Esophagus squamous epithelium (tissue), 5 donors: ENCODE measurements at regions of chr6 and their contacts with region 1.

Region 1: GRCh38 chr6:125153391-125154117 is at the start of gene TPD52L1:
- DNase-seq: no peak
- H3K4me3 ChIP-seq: peak within 1 kb of the TSS; percentile 69 to 76 (median 74)
- H3K27ac ChIP-seq: peak within 1 kb of the TSS; percentile 88 to 96 (median 94)
- H3K4me1 ChIP-seq: peaks cover 0 to 61% (median 7%) of the 10 kb centered on the region in 3 donors
- H3K27me3 ChIP-seq: peaks cover 0 to 4% (median 0%) of the 10 kb centered on the region in 4 donors
- CTCF ChIP-seq: peak; percentile 53 to 95 (median 86)
- POLR2A ChIP-seq: peak in 2 of 4 donors; percentile 24 to 56
- total RNA-seq, gene TPD52L1: 202 to 409 (median 275) TPM

Region 2: GRCh38 chr6:124854338-124854922 is 299.1 kb before region 1 on chr6:
- intact Hi-C with region 1: no loop called
- DNase-seq: no peak
- H3K4me3 ChIP-seq: no peak overlapping the region
- H3K27ac ChIP-seq: no peak overlapping the region
- H3K4me1 ChIP-seq: no peaks in the 10 kb centered on the region
- H3K27me3 ChIP-seq: no peaks in the 10 kb centered on the region
- CTCF ChIP-seq: peak in 2 of 6 experiments; percentile 21 to 30
- POLR2A ChIP-seq: no peak

Region 3: DNA sequence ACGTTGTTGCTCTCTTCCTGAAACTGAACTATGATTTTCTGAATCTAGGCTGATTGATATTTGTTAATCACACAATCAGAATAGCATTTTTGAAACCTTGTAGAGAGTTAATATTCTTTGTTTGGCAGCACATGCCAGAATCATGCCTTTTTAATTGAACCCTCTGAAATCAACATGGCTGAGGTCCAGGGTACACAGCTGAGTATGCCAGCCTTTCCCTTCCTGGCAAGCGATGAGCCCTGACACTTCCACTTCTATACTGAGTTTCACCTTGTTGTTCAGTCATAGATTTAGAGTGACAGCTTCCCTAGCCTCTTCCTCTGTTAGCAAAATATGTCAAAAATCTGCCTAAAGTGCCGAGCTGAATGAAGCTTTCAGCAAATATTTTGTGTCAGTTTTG is 141.4 kb after region 1 on chr6:
- intact Hi-C with region 1: loop called (anchors 10 kb)
- DNase-seq: no peak
- H3K4me3 ChIP-seq: no peak overlapping the region
- H3K27ac ChIP-seq: peak overlapping the region in 1 of 4 donors; percentile 7
- H3K4me1 ChIP-seq: peaks cover 5 to 52% (median 6%) of the 10 kb centered on the region in 3 donors
- H3K27me3 ChIP-seq: no peaks in the 10 kb centered on the region
- CTCF ChIP-seq: no peak
- POLR2A ChIP-seq: no peak

Region 4: GRCh38 chr6:125375821-125376220 is 222.3 kb after region 1 on chr6:
- intact Hi-C with region 1: no loop called
- DNase-seq: no peak
- H3K4me3 ChIP-seq: no peak overlapping the region
- H3K27ac ChIP-seq: no peak overlapping the region
- H3K4me1 ChIP-seq: no peaks in the 10 kb centered on the region
- H3K27me3 ChIP-seq: peaks cover 0 to 8% (median 0%) of the 10 kb centered on the region in 4 donors
- CTCF ChIP-seq: no peak
- POLR2A ChIP-seq: no peak